CD8-positive, alpha-beta T cell (primary cell): ENCODE measurements at regions of chr3 and their contacts with region 1.

Region 1: GRCh38 chr3:148861277-148861869 is 3.7 kb upstream of the CPA3 start:
- DNase-seq: peak in 2 of 9 experiments; percentile 45 to 54
- ATAC-seq: peak; percentile 48
- H3K4me3 ChIP-seq: no peak overlapping the region
- H3K4me3 Mint-ChIP-seq: no peak overlapping the region
- H3K27ac ChIP-seq: no peak overlapping the region
- H3K27ac Mint-ChIP-seq: no peak overlapping the region
- H3K4me1 ChIP-seq: no peaks in the 10 kb centered on the region
- H3K4me1 Mint-ChIP-seq: no peaks in the 10 kb centered on the region
- H3K27me3 ChIP-seq: peaks cover 0 to 2% of the 10 kb centered on the region in 2 experiments
- H3K27me3 Mint-ChIP-seq: peaks cover 10% of the 10 kb centered on the region
- CTCF ChIP-seq: peak; percentile 78

Region 2: GRCh38 chr3:148943506-148944205 is 82.3 kb after region 1 on chr3:
- CTCF ChIA-PET with region 1: interaction called, 14 read pairs
- POLR2A ChIA-PET with region 1: no interaction called
- intact Hi-C with region 1: loop called (anchors 1 kb)
- DNase-seq: peak in 2 of 9 experiments; percentile 53 to 64
- ATAC-seq: peak; percentile 91
- H3K4me3 ChIP-seq: no peak overlapping the region
- H3K4me3 Mint-ChIP-seq: no peak overlapping the region
- H3K27ac ChIP-seq: no peak overlapping the region
- H3K27ac Mint-ChIP-seq: no peak overlapping the region
- H3K4me1 ChIP-seq: no peaks in the 10 kb centered on the region
- H3K4me1 Mint-ChIP-seq: no peaks in the 10 kb centered on the region
- H3K27me3 ChIP-seq: no peaks in the 10 kb centered on the region
- H3K27me3 Mint-ChIP-seq: peaks cover 10% of the 10 kb centered on the region
- CTCF ChIP-seq: peak; percentile 51

Region 3: GRCh38 chr3:148948913-148949657 is 87.7 kb after region 1 on chr3:
- CTCF ChIA-PET with region 1: interaction called, 14 read pairs
- POLR2A ChIA-PET with region 1: no interaction called
- intact Hi-C with region 1: loop called (anchors 1 kb)
- DNase-seq: no peak
- ATAC-seq: no peak
- H3K4me3 ChIP-seq: no peak overlapping the region
- H3K4me3 Mint-ChIP-seq: no peak overlapping the region
- H3K27ac ChIP-seq: no peak overlapping the region
- H3K27ac Mint-ChIP-seq: no peak overlapping the region
- H3K4me1 ChIP-seq: no peaks in the 10 kb centered on the region
- H3K4me1 Mint-ChIP-seq: no peaks in the 10 kb centered on the region
- H3K27me3 ChIP-seq: no peaks in the 10 kb centered on the region
- H3K27me3 Mint-ChIP-seq: no peaks in the 10 kb centered on the region
- CTCF ChIP-seq: no peak

Region 4: DNA sequence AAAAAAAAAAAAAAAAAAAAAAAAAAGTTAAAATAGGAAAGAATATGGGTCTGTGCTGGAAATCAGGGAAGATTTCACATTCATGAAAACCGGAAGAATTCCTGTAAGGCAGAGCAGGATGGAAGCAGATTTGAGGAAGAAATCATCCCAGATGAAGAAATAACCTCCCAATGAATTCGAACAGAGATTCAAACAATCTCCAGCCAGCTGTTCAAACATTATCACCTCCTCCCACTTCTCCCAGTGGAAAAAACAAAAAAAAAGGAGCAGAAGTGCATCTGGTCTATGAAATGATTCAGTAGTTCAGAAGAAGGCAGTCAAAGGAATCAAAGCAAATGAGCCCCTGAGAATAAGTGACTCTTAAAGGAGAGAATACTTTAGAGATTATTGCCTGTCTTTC is 327.1 kb after region 1 on chr3:
- CTCF ChIA-PET with region 1: no interaction called
- POLR2A ChIA-PET with region 1: no interaction called
- intact Hi-C with region 1: no loop called
- DNase-seq: no peak
- ATAC-seq: no peak
- H3K4me3 ChIP-seq: no peak overlapping the region
- H3K4me3 Mint-ChIP-seq: no peak overlapping the region
- H3K27ac ChIP-seq: no peak overlapping the region
- H3K27ac Mint-ChIP-seq: no peak overlapping the region
- H3K4me1 ChIP-seq: no peaks in the 10 kb centered on the region
- H3K4me1 Mint-ChIP-seq: no peaks in the 10 kb centered on the region
- H3K27me3 ChIP-seq: no peaks in the 10 kb centered on the region
- H3K27me3 Mint-ChIP-seq: peaks cover 2% of the 10 kb centered on the region
- CTCF ChIP-seq: no peak